ENCODE measurements at regions of chr9 and their contacts with region 1.

Region 1: DNA sequence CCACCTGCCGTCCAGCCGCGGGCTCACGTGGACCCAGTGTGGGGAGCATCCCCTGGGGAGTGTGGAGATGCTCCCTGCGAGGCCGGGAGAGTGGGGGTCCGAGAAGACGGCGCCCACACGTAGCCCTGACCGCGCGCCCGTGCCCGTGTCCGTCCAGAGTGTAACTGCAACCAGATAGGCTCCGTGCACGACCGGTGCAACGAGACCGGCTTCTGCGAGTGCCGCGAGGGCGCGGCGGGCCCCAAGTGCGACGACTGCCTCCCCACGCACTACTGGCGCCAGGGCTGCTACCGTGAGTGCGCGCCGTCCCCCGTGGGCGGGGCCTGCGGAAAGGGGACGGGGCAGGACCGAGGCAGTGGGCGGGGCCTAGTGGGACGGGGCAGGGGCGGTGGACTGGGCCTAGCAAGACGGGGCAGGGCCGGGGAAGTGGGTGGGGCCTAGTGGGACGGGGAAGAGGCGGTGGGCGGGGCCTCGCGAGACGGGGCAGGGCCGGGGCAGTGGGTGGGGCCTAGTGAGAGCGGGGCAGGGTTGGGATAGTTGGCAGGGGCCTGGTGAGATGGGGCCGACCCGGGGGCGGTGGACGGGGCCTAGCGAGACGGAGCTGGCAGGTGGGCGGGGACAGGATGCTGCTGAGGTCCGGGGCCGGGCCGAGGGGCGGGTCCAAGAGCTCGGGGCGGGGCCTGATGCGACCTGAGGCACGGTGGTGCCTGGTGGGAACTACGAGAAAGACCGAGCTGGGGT is 79.1 kb downstream of the NTNG2 start:
- DNase-seq: peak; percentile 98 to 100 (median 99)
- ATAC-seq: peak; percentile 87
- H3K4me3 ChIP-seq: peak overlapping the region; percentile 67 to 94
- H3K4me3 Mint-ChIP-seq: peak overlapping the region; percentile 97
- H3K27ac ChIP-seq: peak overlapping the region in 1 of 2 experiments; percentile 45
- H3K27ac Mint-ChIP-seq: peak overlapping the region; percentile 80
- H3K4me1 ChIP-seq: peaks cover 20% of the 10 kb centered on the region
- H3K4me1 Mint-ChIP-seq: peaks cover 13% of the 10 kb centered on the region
- H3K27me3 ChIP-seq: peaks cover 0 to under 1% of the 10 kb centered on the region in 2 experiments
- H3K27me3 Mint-ChIP-seq: peaks cover 3% of the 10 kb centered on the region
- CTCF ChIP-seq: no peak

Region 2: DNA sequence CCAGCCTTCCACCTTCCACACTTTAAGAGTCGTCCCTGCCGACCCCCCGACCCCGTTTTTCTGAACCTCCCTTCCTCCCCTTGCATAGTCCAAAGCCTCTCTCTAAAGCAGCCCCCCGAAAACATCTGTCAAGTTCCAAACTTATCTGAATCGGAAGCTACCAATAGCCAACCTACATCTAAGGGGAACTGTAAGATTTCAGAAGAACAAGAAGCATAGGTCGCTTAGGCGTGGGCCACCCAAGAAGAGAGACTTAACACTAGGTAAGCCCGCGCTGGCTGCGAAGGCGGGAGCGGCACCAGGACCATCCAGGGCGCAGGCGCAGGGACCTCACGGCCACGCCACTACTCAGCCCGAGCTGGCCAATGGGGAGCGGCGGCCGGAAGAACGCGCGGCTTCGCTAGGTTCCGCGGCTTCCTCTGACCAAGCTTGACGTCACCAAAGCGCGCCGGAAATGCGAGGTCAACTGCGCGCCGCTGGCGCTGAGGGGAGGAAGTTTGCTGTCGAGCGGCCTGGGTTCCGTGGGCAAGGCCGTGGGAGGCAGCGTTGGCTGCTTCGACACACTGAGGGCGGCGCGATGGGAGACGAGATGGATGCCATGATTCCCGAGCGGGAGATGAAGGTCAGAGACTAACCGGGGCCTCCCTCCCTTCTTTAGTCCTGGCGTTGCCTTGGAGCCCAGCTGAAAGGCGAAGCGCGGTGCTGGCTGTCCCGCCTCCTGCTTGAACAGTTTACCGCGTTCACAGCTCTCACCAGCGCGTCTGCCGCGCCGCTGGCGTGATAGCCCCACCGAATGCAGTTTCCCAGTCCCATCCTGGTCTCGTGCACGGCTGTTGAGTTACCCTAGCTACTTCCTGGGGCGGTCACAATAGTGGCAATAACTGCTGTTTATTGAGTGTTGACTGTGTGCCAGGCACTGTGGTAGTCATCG is 1115.5 kb before region 1 on chr9 and contains the start of gene NUP214:
- CTCF ChIA-PET with region 1: no interaction called
- POLR2A ChIA-PET with region 1: interaction called, 4 read pairs
- intact Hi-C with region 1: loop called in 1 of 2 experiments (anchors 1 kb)
- DNase-seq: peak; percentile 99 to 100 (median 99)
- ATAC-seq: peak; percentile 97
- H3K4me3 ChIP-seq: peak within 1 kb of the TSS; percentile 83 to 95
- H3K4me3 Mint-ChIP-seq: peak within 1 kb of the TSS; percentile 99
- H3K27ac ChIP-seq: peak within 1 kb of the TSS; percentile 93 to 94
- H3K27ac Mint-ChIP-seq: peak within 1 kb of the TSS; percentile 99
- H3K4me1 ChIP-seq: peaks cover 16% of the 10 kb centered on the region
- H3K4me1 Mint-ChIP-seq: peaks cover 31% of the 10 kb centered on the region
- H3K27me3 ChIP-seq: no peaks in the 10 kb centered on the region
- H3K27me3 Mint-ChIP-seq: peaks cover 2% of the 10 kb centered on the region
- CTCF ChIP-seq: no peak
- total RNA-seq, gene NUP214: 120 to 136 TPM

Region 3: GRCh38 chr9:131668439-131669268 is 572.3 kb before region 1 on chr9:
- CTCF ChIA-PET with region 1: no interaction called
- POLR2A ChIA-PET with region 1: no interaction called
- intact Hi-C with region 1: loop called in 1 of 2 experiments (anchors 5 kb)
- DNase-seq: peak; percentile 41 to 88 (median 73)
- ATAC-seq: peak; percentile 74
- H3K4me3 ChIP-seq: peak overlapping the region; percentile 23 to 29
- H3K4me3 Mint-ChIP-seq: peak overlapping the region; percentile 63
- H3K27ac ChIP-seq: peak overlapping the region; percentile 64 to 94
- H3K27ac Mint-ChIP-seq: peak overlapping the region; percentile 99
- H3K4me1 ChIP-seq: peaks cover 73% of the 10 kb centered on the region
- H3K4me1 Mint-ChIP-seq: peaks cover 83% of the 10 kb centered on the region
- H3K27me3 ChIP-seq: no peaks in the 10 kb centered on the region
- H3K27me3 Mint-ChIP-seq: no peaks in the 10 kb centered on the region
- CTCF ChIP-seq: no peak

Region 4: DNA sequence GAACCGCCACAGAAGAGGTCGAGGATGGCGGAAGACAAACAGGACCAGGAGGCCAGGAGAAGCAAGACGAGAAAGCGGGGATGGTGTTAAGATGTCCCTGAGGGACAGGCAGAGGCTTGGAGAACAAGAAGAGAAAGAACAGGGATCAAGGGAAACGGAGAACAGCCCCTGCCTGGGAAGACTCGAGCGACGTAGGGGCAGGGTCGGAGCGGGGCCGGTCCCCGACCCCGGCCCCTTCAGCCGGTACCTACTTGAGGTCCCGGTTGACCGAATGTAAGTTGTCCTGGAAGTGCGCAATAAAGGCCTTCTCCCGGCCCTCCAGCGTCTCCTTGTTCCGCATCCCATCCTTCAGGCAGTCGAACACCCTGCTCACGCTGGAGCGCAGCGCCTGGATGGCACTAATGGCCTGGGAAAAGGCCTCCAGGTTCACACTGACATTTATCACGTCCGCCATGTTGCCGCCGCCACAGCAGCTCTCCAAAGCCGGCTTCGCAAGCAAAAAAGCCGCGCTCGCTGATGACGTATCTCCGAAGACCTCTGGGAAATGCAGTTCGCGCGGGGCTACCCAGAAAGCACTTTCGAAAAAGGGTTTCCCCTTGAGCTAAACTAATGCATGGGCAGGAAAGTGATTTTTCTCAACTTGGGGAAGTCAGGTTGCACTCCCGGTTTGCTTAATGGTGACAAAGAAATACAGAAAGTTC is 161.4 kb before region 1 on chr9 and contains the start of gene MED27:
- CTCF ChIA-PET with region 1: interaction called, 6 read pairs
- POLR2A ChIA-PET with region 1: interaction called, 3 read pairs
- intact Hi-C with region 1: loop called in 1 of 2 experiments (anchors 1 kb)
- DNase-seq: peak; percentile 82 to 97 (median 94)
- ATAC-seq: peak; percentile 98
- H3K4me3 ChIP-seq: peak within 1 kb of the TSS; percentile 66 to 67
- H3K4me3 Mint-ChIP-seq: peak within 1 kb of the TSS; percentile 97
- H3K27ac ChIP-seq: peak within 1 kb of the TSS; percentile 57 to 65
- H3K27ac Mint-ChIP-seq: peak within 1 kb of the TSS; percentile 95
- H3K4me1 ChIP-seq: peaks cover 28% of the 10 kb centered on the region
- H3K4me1 Mint-ChIP-seq: peaks cover 50% of the 10 kb centered on the region
- H3K27me3 ChIP-seq: no peaks in the 10 kb centered on the region
- H3K27me3 Mint-ChIP-seq: no peaks in the 10 kb centered on the region
- CTCF ChIP-seq: no peak
- total RNA-seq, gene MED27: 17.8 to 18.6 TPM

Region 5: GRCh38 chr9:132354637-132355355 is 113.9 kb after region 1 on chr9 and contains the start of gene SETX:
- CTCF ChIA-PET with region 1: no interaction called
- POLR2A ChIA-PET with region 1: interaction called, 5 read pairs
- intact Hi-C with region 1: loop called (anchors 2 to 5 kb)
- DNase-seq: peak; percentile 92 to 99 (median 97)
- ATAC-seq: peak; percentile 83
- H3K4me3 ChIP-seq: peak within 1 kb of the TSS; percentile 77 to 86
- H3K4me3 Mint-ChIP-seq: peak within 1 kb of the TSS; percentile 87
- H3K27ac ChIP-seq: peak within 1 kb of the TSS; percentile 94 to 97
- H3K27ac Mint-ChIP-seq: peak within 1 kb of the TSS; percentile 98
- H3K4me1 ChIP-seq: peaks cover 40% of the 10 kb centered on the region
- H3K4me1 Mint-ChIP-seq: peaks cover 44% of the 10 kb centered on the region
- H3K27me3 ChIP-seq: no peaks in the 10 kb centered on the region
- H3K27me3 Mint-ChIP-seq: no peaks in the 10 kb centered on the region
- CTCF ChIP-seq: no peak
- total RNA-seq, gene SETX: 37.5 to 40.7 TPM

Region 6: DNA sequence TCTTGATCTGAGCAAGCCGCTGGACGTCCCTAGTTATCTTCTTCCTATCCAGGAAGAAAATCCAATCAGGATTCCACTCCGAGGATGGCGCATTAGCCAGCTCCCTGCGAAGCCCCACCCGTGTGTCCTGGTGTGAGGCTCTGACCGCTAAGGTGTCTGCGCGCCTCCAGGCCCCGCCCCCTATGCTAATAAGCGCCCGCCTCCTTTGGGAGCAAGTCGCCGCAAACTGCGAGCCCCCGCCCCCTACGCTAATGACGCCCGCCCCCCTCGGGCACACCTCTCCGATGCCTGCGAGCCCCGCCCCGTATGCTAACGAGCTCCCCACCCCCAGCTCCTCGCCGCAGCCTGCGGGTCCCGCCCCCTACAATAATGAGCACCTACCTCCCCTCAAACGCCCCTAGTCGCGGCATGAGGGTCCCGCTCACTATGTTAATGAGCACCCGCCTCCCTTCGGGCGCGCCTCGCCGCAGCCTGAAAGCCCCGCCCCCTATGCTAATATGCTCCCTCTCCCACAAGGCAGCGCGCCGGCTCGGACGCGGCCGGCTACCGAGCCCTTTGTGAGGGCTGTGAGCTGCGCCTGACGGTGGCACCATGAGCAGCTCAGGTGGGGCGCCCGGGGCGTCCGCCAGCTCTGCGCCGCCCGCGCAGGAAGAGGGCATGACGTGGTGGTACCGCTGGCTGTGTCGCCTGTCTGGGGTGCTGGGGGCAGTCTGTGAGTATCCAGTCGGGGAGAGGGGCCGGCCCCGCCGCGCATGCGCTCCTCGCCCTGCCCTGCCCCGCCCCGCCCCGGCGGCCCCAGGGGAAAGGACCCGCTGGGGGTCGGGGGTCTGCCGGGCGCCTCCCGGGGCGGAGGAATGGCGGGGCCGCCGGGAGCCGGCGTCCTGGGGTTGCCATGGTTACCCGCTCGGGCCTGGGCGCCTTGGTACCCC is 1218.8 kb after region 1 on chr9 and contains the start of gene CACFD1:
- CTCF ChIA-PET with region 1: no interaction called
- POLR2A ChIA-PET with region 1: no interaction called
- intact Hi-C with region 1: loop called in 1 of 2 experiments (anchors 5 kb)
- DNase-seq: peak; percentile 77 to 96 (median 93)
- ATAC-seq: peak; percentile 80
- H3K4me3 ChIP-seq: peak within 1 kb of the TSS; percentile 71 to 76
- H3K4me3 Mint-ChIP-seq: peak within 1 kb of the TSS; percentile 87
- H3K27ac ChIP-seq: peak within 1 kb of the TSS; percentile 74 to 80
- H3K27ac Mint-ChIP-seq: peak within 1 kb of the TSS; percentile 97
- H3K4me1 ChIP-seq: peaks cover 14% of the 10 kb centered on the region
- H3K4me1 Mint-ChIP-seq: peaks cover 12% of the 10 kb centered on the region
- H3K27me3 ChIP-seq: no peaks in the 10 kb centered on the region
- H3K27me3 Mint-ChIP-seq: no peaks in the 10 kb centered on the region
- CTCF ChIP-seq: no peak
- total RNA-seq, gene CACFD1: 7.4 to 9.7 TPM